SK-N-SH (cell line): ENCODE measurements at regions of chr1 and their contacts with region 1.

Region 1: DNA sequence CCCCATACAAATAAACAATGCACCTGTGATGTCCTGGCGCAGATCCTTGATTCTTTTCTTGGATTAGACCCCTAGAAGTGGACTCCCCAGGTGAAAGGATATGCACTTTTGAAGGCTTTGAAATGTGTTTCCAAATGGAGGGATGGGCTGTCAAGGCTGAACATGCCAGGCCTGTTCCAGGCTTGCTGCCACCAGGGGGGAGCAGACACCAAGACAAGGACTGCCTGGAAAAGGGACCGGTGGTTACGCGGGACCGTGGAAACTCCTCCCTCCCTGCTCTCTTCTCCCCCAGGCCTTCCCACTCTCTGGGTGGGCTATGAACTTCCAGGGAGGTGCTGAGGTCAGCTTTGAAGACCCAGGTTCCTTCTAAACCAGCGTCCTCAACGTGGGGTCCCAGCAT is 12.7 kb downstream of the C1QB start:
- DNase-seq: peak; percentile 77
- H3K4me3 ChIP-seq: no peak overlapping the region; a peak in 1 of 4 replicates
- H3K27ac ChIP-seq: no peak overlapping the region
- H3K4me1 ChIP-seq: no peaks in the 10 kb centered on the region
- H3K27me3 ChIP-seq: peaks cover 20% of the 10 kb centered on the region; the same call in 1 of the 2 replicates
- CTCF ChIP-seq: peak; percentile 69
- EP300 ChIP-seq: no peak
- RAD21 ChIP-seq: peak; percentile 87

Region 2: GRCh38 chr1:22654692-22655091 is 11.1 kb before region 1 on chr1:
- CTCF ChIA-PET with region 1: interaction called, 14 read pairs
- POLR2A ChIA-PET with region 1: no interaction called
- DNase-seq: no peak
- H3K4me3 ChIP-seq: no peak overlapping the region
- H3K27ac ChIP-seq: no peak overlapping the region
- H3K4me1 ChIP-seq: peaks cover 0 to 10% of the 10 kb centered on the region in 2 experiments; a peak in 1 of 4 replicates
- H3K27me3 ChIP-seq: peaks cover 21% of the 10 kb centered on the region
- CTCF ChIP-seq: no peak; the same call in 1 of the 2 replicates
- EP300 ChIP-seq: no peak
- RAD21 ChIP-seq: no peak

Region 3: DNA sequence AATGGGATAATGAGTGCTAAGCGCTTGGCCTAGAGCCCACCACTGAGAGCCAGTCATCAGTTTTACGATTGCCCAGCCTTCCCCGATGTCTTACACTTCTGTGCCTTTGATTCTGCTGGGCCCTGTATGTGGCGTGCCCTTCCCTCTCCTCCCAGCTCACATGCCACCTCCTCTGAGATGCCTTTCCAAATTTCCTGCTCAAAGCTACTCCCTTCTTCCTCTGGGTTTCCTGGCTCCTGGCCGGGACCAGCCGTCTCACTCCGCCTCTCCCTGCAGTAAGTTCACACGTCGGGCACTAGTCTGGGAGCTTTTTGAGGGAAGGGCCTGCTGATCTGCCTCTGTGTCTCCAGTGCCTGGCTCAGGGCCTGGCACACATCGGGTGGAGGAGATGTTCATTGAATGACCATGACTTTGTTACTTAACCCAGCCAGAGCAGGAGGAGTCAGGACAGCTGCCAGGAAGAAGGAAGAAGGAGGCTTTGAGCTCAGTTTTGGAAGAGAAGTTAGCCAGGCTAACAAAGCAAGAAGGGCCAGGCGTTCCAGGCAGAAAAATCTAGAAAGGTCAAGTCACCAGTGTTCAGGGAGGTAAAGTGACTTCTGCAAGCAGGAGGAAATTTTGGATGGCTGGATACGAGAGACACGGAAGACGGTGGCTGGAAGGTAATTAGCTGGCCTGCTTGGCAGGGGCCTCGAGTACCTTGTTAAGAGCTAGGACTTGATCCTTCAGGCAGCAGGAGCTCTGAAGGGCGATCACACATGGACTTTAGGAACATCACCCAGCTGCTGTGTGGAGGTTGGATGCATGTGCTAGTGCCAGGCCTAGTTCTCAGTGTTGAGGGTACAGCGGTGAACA is 108.5 kb after region 1 on chr1:
- CTCF ChIA-PET with region 1: no interaction called
- POLR2A ChIA-PET with region 1: no interaction called
- DNase-seq: no peak
- H3K4me3 ChIP-seq: no peak overlapping the region
- H3K27ac ChIP-seq: no peak overlapping the region
- H3K4me1 ChIP-seq: peaks cover 0 to 19% of the 10 kb centered on the region in 2 experiments; a peak in 1 of 4 replicates
- H3K27me3 ChIP-seq: no peaks in the 10 kb centered on the region
- CTCF ChIP-seq: no peak
- EP300 ChIP-seq: no peak
- RAD21 ChIP-seq: no peak

Region 4: DNA sequence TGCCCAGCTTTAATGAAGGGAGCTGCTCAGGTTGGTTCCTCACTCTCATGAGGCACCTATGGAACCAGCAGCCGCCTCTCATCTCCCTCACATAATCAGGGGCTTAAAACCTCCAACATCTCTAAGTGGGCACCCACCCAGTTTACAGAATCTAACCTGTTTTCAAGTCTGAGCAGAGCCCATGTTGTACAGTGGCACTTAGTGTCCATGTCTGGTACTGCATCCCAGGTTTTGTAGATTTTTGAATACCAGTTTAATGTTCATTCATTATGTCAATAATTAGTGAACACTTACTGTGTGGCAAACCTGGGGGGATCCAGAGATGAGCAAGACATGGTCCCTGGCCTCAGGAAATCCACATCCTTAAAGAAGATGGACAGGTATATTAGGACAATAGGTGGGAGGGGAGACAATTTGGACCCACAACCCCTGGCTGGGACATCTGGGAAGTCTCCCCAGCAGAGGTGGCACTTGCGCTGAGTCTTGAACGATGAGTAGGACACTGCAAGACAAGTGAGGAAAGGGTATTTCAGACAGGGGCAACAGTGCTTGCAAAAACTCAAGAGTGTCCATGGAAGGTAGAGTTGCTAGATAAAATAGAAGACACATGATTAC is 223.6 kb after region 1 on chr1:
- CTCF ChIA-PET with region 1: interaction called, 18 read pairs
- POLR2A ChIA-PET with region 1: no interaction called
- DNase-seq: peak; percentile 75
- H3K4me3 ChIP-seq: no peak overlapping the region
- H3K27ac ChIP-seq: peak overlapping the region in 1 of 2 experiments; percentile 29; a peak in 1 of 4 replicates
- H3K4me1 ChIP-seq: peaks cover 0 to 9% of the 10 kb centered on the region in 2 experiments; a peak in 1 of 4 replicates
- H3K27me3 ChIP-seq: no peaks in the 10 kb centered on the region
- CTCF ChIP-seq: peak; percentile 84
- EP300 ChIP-seq: no peak
- RAD21 ChIP-seq: peak; percentile 85